Left cardiac atrium (tissue), 4 donors: ENCODE measurements at regions of chr5 and their contacts with region 1.

Region 1: DNA sequence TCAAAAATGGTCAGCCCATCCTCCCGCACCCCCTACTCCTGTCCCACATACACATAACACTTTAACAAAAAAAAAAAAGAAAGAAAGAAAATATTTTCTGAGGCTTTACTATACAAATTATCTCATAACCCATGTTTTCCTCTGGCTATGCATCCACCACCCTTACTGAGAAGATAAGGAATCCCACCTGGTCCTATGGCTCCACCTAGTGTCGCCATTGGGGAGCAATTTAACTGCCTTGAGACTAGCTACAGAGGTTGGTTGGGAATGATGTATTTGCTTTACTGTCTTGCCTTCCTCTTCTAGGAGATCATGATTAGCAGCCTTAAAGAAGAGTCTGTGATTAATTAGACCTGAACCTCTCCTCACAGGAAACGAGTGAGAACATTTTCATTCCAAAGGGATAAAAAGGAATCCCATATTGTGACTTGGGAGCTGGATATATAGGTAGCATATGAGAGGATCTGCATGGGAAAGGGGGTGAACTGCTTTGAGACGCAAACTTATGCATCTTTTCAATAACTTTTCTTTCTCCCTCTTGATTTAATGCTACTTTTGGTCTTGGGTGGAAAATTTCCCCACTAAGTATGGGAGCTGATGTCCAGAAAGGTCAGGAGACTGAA is 77.7 kb upstream of the SELENOP start:
- DNase-seq: peak; percentile 73
- ATAC-seq: peak; percentile 90 to 92

Region 2: GRCh38 chr5:42807722-42808447 is 81.5 kb before region 1 on chr5:
- intact Hi-C with region 1: loop called in 1 of 2 experiments (anchors 5 kb)
- DNase-seq: no peak
- ATAC-seq: peak in 1 of 2 donors; percentile 25

Region 3: DNA sequence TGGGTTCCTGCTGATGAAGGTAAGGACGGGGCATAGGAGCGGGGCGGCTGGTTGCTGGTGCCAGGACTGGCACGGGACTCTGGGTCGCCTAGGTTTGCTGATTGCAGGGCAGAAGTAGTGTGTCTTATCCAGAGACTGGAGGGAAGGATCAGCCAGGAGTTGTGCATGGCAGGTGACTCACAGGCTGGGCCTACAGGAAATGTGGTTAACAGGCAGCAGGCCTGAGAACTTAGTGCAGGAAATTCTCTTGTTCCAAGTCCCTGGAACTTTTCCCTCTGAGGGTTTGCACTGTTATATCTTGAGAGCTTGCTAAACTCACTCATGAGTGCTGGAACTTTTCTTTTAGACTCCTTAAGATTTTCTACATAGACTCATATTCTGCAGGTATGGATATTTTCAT is 55.6 kb after region 1 on chr5:
- intact Hi-C with region 1: no loop called
- DNase-seq: no peak
- ATAC-seq: no peak